ENCODE measurements at regions of chr17 and their contacts with region 1.

Region 1: DNA sequence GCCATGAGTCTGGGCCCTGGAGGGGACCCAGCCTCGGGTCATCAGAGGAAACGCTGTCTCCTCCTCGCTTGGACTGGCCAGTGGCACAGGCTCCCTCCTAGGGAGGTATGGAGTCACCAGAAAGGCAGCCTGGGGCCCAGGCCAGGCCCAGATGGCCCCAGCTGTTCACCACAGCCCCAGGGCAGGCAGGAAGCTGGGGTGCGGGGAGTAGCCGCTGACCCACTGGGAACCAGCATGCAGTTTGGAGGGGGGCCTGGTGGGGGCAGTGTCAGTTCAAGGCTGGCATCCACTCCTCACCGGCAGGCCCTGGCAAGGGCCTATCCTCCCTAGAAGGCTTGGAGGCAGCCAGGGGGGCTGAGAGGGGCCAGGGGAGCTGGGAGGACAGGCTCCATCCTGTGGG is 48.8 kb downstream of the SDK2 start:
- DNase-seq: no peak
- ATAC-seq: peak in 1 of 2 donors; percentile 47
- H3K4me3 ChIP-seq: no peak overlapping the region
- H3K27ac ChIP-seq: no peak overlapping the region
- H3K4me1 ChIP-seq: no peaks in the 10 kb centered on the region
- H3K27me3 ChIP-seq: no peaks in the 10 kb centered on the region
- CTCF ChIP-seq: peak; percentile 9 to 58 (median 43)
- POLR2A ChIP-seq: no peak

Region 2: DNA sequence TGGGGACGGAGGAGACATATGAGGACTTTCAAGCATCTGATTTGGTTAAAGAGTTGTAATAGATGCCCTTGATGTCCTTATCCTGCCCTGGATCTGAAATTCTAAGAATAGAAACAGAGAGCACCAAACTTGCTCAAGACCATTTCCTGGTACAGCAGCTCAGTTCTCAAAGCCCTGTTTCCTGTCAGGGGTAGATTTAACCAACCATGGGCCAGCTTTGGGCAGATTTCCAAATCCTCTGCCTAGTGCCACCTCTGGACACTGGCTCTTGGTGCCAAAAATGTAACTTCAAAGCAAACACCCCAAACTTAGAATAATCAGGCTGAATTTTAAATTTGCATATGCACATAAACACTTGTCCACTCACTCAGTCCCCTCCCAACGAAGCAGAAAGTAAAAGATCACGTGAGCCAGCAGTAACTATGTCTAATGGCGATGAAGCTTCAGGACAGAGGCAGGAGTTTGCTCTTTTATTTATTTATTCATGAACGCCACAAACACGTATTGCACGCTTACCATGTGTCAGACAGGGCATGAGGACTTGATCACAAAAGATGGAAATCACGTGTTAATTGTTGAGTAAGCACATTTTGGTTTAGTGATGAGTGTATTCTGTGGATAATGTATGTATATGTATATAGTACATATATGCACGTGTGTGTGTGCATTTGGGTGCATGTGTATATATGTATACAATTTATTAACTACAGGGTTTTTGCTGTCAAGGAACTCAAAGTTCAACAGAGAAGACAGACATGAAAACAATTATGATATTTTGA is 71.9 kb after region 1 on chr17:
- in situ Hi-C with region 1: loop called in 1 of 4 experiments (anchors 10 kb)
- intact Hi-C with region 1: no loop called
- DNase-seq: no peak
- ATAC-seq: no peak
- H3K4me3 ChIP-seq: no peak overlapping the region
- H3K27ac ChIP-seq: no peak overlapping the region
- H3K4me1 ChIP-seq: no peaks in the 10 kb centered on the region
- H3K27me3 ChIP-seq: peaks cover 0 to 3% (median 0%) of the 10 kb centered on the region in 3 donors
- CTCF ChIP-seq: no peak
- POLR2A ChIP-seq: no peak

Region 3: DNA sequence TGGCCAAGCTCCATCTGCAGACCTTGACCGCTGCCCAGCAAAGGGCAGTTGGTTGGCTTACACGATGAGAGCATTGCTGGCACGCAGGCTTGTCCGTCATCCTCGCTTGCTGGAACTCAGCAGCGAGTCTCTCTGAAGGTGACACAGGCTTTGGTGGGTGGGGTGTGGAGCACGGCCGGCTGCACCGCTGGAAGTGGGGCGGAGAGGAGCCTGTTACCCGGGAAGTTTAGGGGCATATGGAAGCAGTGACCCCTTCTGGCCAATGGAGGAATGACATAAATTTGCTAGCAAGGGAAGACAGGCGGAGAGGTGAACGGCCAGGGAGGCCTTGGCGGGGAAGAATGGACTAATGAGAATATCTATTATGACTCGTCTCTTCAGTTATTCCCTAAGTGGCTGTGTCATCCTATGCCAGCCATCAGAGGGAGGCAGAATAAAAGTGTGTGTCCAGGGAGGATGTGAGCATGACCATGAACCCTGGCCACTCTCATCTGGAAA is 114.7 kb after region 1 on chr17:
- in situ Hi-C with region 1: no loop called
- intact Hi-C with region 1: loop called (anchors 5 kb)
- DNase-seq: peak in 1 of 2 donors; percentile 14
- ATAC-seq: no peak
- H3K4me3 ChIP-seq: no peak overlapping the region
- H3K27ac ChIP-seq: no peak overlapping the region
- H3K4me1 ChIP-seq: no peaks in the 10 kb centered on the region
- H3K27me3 ChIP-seq: peaks cover 0 to 21% (median 0%) of the 10 kb centered on the region in 3 donors
- CTCF ChIP-seq: peak; percentile 23 to 71 (median 59)
- POLR2A ChIP-seq: no peak

Region 4: GRCh38 chr17:73952480-73953205 is 357.2 kb after region 1 on chr17:
- in situ Hi-C with region 1: no loop called
- intact Hi-C with region 1: no loop called
- DNase-seq: no peak
- ATAC-seq: no peak
- H3K4me3 ChIP-seq: peak overlapping the region; percentile 6 to 33 (median 16)
- H3K27ac ChIP-seq: no peak overlapping the region
- H3K4me1 ChIP-seq: peaks cover 0 to 4% of the 10 kb centered on the region in 2 donors
- H3K27me3 ChIP-seq: peaks cover 26 to 32% (median 30%) of the 10 kb centered on the region in 3 donors
- CTCF ChIP-seq: no peak
- POLR2A ChIP-seq: no peak

Measured in gastrocnemius medialis (tissue), 4 donors.